Mammary epithelial cell (primary cell): ENCODE measurements at regions of chr14 and their contacts with region 1.

Region 1: DNA sequence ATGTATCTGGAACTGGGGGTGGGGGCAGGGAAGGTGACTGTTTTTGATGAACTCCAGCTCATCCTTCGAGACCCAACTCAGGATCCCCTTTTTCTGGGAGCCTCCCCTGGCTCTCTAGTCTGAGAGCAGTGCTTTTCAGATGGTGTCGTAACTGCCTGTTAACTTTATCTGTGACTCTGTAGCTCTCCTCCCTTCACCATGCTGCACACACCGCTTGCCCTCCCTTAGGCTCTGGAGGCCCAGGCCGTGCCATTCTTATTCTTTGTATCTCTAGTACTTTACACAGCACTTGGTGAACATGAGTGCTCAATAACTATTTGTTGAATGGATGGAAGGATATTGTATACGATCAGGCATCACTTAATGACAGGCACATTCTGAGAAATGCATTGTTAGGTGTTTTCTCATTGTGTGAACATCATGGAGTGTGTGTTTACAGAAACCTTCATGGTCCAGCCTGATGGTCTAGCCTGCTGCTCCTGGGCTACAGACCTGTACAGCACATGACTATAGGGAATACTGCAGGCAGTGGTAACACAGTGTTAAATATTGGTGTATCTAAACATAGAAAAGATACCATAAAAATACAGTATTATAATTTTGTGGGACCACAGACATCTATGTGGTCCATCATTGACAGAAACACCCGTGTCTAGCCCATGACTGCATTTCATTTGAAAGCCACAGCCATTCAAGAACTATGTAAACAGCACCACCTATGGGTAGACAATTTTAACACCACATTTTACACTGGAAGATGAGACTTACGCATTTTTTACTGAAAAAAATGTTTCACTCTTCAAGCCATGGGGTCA is 91.8 kb downstream of the EML1 start:
- DNase-seq: peak; percentile 23
- H3K4me3 ChIP-seq: no peak overlapping the region
- H3K27ac ChIP-seq: no peak overlapping the region
- H3K4me1 ChIP-seq: no peaks in the 10 kb centered on the region
- H3K27me3 ChIP-seq: peaks cover 4% of the 10 kb centered on the region
- CTCF ChIP-seq: peak; percentile 53 to 75

Region 2: GRCh38 chr14:99389174-99389826 is 495.7 kb before region 1 on chr14:
- CTCF ChIA-PET with region 1: no interaction called
- dilution Hi-C with region 1: no loop called
- in situ Hi-C with region 1: no loop called
- intact Hi-C with region 1: loop called (anchors 2 kb)
- DNase-seq: peak; percentile 21
- H3K4me3 ChIP-seq: no peak overlapping the region
- H3K27ac ChIP-seq: no peak overlapping the region
- H3K4me1 ChIP-seq: no peaks in the 10 kb centered on the region
- H3K27me3 ChIP-seq: peaks cover 3% of the 10 kb centered on the region
- CTCF ChIP-seq: peak; percentile 56 to 81

Region 3: DNA sequence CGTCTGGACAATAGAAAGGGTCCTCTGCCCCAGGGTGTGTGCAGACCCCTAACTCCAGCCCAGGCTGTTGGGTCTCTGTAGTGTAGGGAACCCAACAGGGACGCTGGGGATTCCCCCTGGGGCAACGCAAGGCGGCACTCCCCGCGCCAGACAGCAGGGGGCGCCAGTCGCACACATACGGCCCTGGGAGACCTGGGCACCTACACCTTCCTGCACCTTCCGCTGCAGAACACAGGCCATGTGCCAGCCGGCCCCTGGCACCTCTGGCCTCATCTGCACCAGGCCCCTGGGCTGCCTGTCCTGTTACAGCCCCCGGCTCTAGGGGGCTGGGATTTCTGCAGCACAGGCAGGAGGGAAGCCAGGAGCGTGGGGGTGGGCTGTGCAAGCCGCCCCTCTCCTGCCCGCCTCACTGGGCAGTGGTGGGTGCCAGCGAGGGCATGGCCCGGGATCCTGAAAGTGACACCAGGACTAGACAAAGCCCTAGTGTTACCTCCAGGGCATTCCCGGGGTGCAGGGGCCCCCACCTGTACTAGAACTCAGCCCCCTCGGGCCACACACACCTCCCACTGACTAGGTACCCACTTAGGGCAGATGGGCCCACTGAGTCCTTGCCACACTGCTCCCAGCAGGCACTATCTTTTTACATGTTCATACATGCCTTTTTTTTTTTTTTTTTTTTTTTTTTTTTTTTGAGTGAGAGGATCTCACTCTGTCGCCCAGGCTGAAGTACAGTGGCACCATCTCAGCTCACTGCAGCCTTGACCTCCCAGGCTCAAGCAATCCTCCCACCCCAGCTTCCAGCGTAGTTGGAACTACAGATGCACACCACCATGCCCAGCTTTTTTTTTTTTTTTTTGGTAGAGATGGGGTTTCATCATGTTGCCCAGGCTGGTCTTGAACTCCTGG is 366.3 kb before region 1 on chr14:
- CTCF ChIA-PET with region 1: no interaction called
- dilution Hi-C with region 1: no loop called
- in situ Hi-C with region 1: loop called (anchors 10 to 25 kb)
- intact Hi-C with region 1: loop called (anchors 1 kb)
- DNase-seq: peak; percentile 58
- H3K4me3 ChIP-seq: no peak overlapping the region
- H3K27ac ChIP-seq: no peak overlapping the region
- H3K4me1 ChIP-seq: peaks cover 4% of the 10 kb centered on the region
- H3K27me3 ChIP-seq: no peaks in the 10 kb centered on the region
- CTCF ChIP-seq: peak; percentile 95 to 96

Region 4: GRCh38 chr14:99524804-99525698 is 360.0 kb before region 1 on chr14:
- CTCF ChIA-PET with region 1: no interaction called
- dilution Hi-C with region 1: no loop called
- in situ Hi-C with region 1: loop called (anchors 10 to 25 kb)
- intact Hi-C with region 1: no loop called
- DNase-seq: no peak
- H3K4me3 ChIP-seq: no peak overlapping the region
- H3K27ac ChIP-seq: no peak overlapping the region
- H3K4me1 ChIP-seq: peaks cover 4% of the 10 kb centered on the region
- H3K27me3 ChIP-seq: no peaks in the 10 kb centered on the region
- CTCF ChIP-seq: peak in 1 of 2 donors; percentile 32

Region 5: GRCh38 chr14:99619835-99620834 is 264.9 kb before region 1 on chr14:
- CTCF ChIA-PET with region 1: no interaction called
- dilution Hi-C with region 1: no loop called
- in situ Hi-C with region 1: no loop called
- intact Hi-C with region 1: no loop called
- DNase-seq: no peak
- H3K4me3 ChIP-seq: no peak overlapping the region
- H3K27ac ChIP-seq: no peak overlapping the region
- H3K4me1 ChIP-seq: peaks cover 31% of the 10 kb centered on the region
- H3K27me3 ChIP-seq: no peaks in the 10 kb centered on the region
- CTCF ChIP-seq: no peak

Region 6: GRCh38 chr14:99729991-99730868 is 154.8 kb before region 1 on chr14:
- CTCF ChIA-PET with region 1: no interaction called
- dilution Hi-C with region 1: no loop called
- in situ Hi-C with region 1: loop called in 1 of 2 experiments (anchors 10 kb)
- intact Hi-C with region 1: loop called (anchors 1 kb)
- DNase-seq: no peak
- H3K4me3 ChIP-seq: no peak overlapping the region
- H3K27ac ChIP-seq: no peak overlapping the region
- H3K4me1 ChIP-seq: peaks cover 6% of the 10 kb centered on the region
- H3K27me3 ChIP-seq: peaks cover 5% of the 10 kb centered on the region
- CTCF ChIP-seq: peak; percentile 70 to 75